ENCODE measurements at regions of chr15 and their contacts with region 1.

Region 1: GRCh38 chr15:84929744-84930371 is 45.4 kb downstream of the SLC28A1 start:
- DNase-seq: peak; percentile 53
- H3K4me3 ChIP-seq: no peak overlapping the region
- H3K27ac ChIP-seq: no peak overlapping the region
- H3K4me1 ChIP-seq: peaks cover 8 to 13% of the 10 kb centered on the region in 2 experiments; a peak in 2 of 4 replicates
- H3K27me3 ChIP-seq: no peaks in the 10 kb centered on the region
- CTCF ChIP-seq: no peak
- EP300 ChIP-seq: no peak
- RAD21 ChIP-seq: no peak

Region 2: DNA sequence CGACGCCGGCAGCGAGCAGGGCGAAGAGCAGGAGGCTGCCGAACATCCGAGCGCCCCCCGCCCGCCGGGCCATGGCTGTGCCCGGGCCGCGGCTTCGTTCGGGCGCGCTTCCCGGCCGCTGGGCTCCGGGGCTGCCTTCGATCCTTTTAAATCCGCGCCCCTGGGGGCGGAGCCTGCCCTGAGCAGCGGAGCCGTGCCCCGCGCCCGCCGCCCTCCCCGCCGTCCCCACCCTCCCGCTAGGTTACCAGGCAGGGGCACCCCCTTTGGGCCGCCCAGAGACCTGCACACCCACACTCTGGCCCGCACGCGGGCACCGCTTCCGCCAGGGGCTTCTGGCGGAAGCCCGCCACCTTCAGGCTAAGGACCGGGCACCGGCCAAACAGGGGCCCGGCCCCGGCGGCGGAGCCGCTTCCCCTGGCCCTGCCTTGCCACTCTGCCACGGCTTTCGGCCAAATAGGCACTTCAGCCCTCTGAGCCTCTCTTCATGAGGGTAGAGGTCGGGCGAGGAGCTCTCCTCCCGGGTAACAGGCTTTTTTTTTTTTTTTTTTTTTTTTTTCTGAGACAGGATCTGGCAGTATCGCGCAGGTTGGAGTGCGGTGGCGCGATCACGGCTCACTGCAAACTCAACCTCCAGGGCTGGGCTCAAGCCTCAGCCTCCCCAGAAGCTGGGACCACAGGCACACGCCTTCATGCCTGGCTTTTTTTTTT is 271.6 kb before region 1 on chr15 and contains the start of gene NMB:
- CTCF ChIA-PET with region 1: interaction called, 38 read pairs
- POLR2A ChIA-PET with region 1: interaction called, 4 read pairs
- DNase-seq: peak; percentile 98
- H3K4me3 ChIP-seq: peak within 1 kb of the TSS; percentile 52 to 54; a peak in 3 of 4 replicates
- H3K27ac ChIP-seq: peak within 1 kb of the TSS; percentile 53 to 83
- H3K4me1 ChIP-seq: peaks cover 4 to 23% of the 10 kb centered on the region in 2 experiments; a peak in 2 of 4 replicates
- H3K27me3 ChIP-seq: no peaks in the 10 kb centered on the region
- CTCF ChIP-seq: peak; percentile 70
- EP300 ChIP-seq: no peak
- RAD21 ChIP-seq: peak; percentile 36
- polyA plus RNA-seq, gene NMB: 5.3 and 6.5 TPM in 2 replicates

Region 3: DNA sequence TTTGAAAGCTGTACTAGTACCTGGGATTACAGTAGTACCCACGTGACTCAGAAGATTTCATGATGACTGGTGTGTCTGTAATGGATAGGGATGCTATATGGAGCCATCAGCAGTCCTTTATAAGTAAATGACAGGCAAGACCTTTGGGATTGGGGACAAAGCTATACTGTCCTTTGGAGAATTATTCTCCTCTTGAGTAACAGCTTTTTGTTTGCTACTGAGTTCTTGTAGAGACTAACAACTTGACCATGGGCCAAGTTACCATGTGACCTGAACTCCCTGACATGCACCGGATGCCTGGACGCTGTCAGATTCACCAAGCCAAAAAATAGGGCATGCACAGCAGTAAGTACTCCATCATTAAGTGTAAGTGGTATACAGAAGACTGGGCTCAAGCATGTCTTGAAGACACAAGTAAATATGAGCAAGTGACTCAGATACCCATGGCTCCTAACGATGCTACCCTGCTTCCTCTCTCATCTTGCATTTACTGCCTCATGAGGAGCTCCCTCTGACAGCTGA is 226.8 kb before region 1 on chr15:
- CTCF ChIA-PET with region 1: no interaction called
- POLR2A ChIA-PET with region 1: no interaction called
- DNase-seq: no peak
- H3K4me3 ChIP-seq: no peak overlapping the region
- H3K27ac ChIP-seq: no peak overlapping the region
- H3K4me1 ChIP-seq: no peaks in the 10 kb centered on the region; a peak in 1 of 4 replicates
- H3K27me3 ChIP-seq: no peaks in the 10 kb centered on the region
- CTCF ChIP-seq: no peak
- EP300 ChIP-seq: no peak
- RAD21 ChIP-seq: no peak

Region 4: GRCh38 chr15:84716036-84716799 is 213.6 kb before region 1 on chr15 and contains the start of gene SEC11A:
- CTCF ChIA-PET with region 1: interaction called, 13 read pairs
- POLR2A ChIA-PET with region 1: interaction called, 8 read pairs
- DNase-seq: peak; percentile 97
- H3K4me3 ChIP-seq: peak within 1 kb of the TSS; percentile 68 to 90
- H3K27ac ChIP-seq: peak within 1 kb of the TSS; percentile 92 to 93
- H3K4me1 ChIP-seq: peaks cover 5 to 7% of the 10 kb centered on the region in 2 experiments; a peak in 3 of 4 replicates
- H3K27me3 ChIP-seq: no peaks in the 10 kb centered on the region
- CTCF ChIP-seq: no peak
- EP300 ChIP-seq: peak in 1 of 2 experiments; percentile 18; a peak in 1 of 4 replicates
- RAD21 ChIP-seq: no peak
- polyA plus RNA-seq, gene SEC11A: 107 and 134 TPM in 2 replicates

Region 5: GRCh38 chr15:84863565-84864443 is 66.1 kb before region 1 on chr15:
- CTCF ChIA-PET with region 1: interaction called, 13 read pairs
- POLR2A ChIA-PET with region 1: no interaction called
- DNase-seq: no peak
- H3K4me3 ChIP-seq: no peak overlapping the region
- H3K27ac ChIP-seq: no peak overlapping the region; a peak in 1 of 4 replicates
- H3K4me1 ChIP-seq: peaks cover 0 to 6% of the 10 kb centered on the region in 2 experiments; a peak in 1 of 4 replicates
- H3K27me3 ChIP-seq: no peaks in the 10 kb centered on the region
- CTCF ChIP-seq: peak; percentile 8; the same call in 1 of the 2 replicates
- EP300 ChIP-seq: no peak
- RAD21 ChIP-seq: peak; percentile 37

Region 6: GRCh38 chr15:84908564-84908963 is 21.3 kb before region 1 on chr15:
- CTCF ChIA-PET with region 1: interaction called, 17 read pairs
- POLR2A ChIA-PET with region 1: no interaction called
- DNase-seq: no peak
- H3K4me3 ChIP-seq: no peak overlapping the region
- H3K27ac ChIP-seq: no peak overlapping the region
- H3K4me1 ChIP-seq: peaks cover 24 to 39% of the 10 kb centered on the region in 2 experiments; a peak in 3 of 4 replicates
- H3K27me3 ChIP-seq: no peaks in the 10 kb centered on the region
- CTCF ChIP-seq: no peak
- EP300 ChIP-seq: no peak
- RAD21 ChIP-seq: no peak

Region 7: DNA sequence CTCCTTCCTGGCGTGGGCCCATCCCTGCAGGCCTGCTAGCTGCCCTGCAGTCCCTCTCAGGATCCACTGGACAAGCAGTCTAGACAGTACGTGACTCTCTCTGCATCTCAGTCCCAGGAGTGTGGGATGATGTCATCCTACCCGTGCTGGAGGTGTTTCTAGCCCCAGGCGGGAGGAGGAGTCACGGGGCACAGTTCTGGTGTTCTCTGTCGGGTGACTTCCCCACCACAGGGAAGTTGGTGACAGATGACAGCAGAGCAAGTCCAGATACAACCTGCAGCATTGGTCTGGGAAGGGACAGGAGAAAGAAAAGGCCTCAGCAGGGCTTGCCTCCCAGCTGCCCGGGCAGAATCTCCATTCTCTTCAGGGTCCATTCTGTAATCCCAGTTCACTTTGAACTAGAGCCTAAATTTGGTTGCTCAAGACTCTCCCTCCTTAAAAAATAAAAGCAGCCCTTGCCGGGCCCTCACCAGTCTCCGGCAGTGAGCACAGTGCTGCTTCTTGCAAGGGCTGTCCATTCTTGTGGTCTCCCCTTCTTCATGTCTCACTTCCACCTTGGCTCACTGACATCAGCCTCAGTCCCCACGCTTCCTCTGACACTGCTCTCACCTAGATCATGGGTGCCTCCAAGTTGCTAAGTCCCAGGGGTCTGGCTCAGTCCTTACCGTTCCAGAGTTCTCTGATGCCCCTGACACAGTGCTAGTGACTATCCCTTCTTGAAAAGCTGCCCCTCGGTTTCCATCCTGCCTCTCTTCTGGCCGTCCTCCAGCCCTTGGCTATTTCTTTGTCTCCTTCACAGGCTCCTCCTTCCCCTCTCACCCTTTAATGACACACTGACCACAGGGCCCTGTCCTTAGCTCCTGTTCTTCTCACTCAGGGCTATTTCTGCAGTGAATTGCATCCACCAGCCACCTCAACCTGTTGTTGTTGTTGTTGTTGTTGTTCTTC is 14.6 kb before region 1 on chr15:
- CTCF ChIA-PET with region 1: interaction called, 17 read pairs
- POLR2A ChIA-PET with region 1: interaction called, 3 read pairs
- DNase-seq: peak; percentile 90
- H3K4me3 ChIP-seq: no peak overlapping the region
- H3K27ac ChIP-seq: peak overlapping the region; percentile 71 to 89
- H3K4me1 ChIP-seq: peaks cover 38 to 42% of the 10 kb centered on the region in 2 experiments; a peak in 3 of 4 replicates
- H3K27me3 ChIP-seq: no peaks in the 10 kb centered on the region
- CTCF ChIP-seq: no peak
- EP300 ChIP-seq: peak in 1 of 2 experiments; percentile 76; a peak in 2 of 4 replicates
- RAD21 ChIP-seq: no peak; the same call in 1 of the 2 replicates

Region 8: GRCh38 chr15:85100186-85100937 is 170.5 kb after region 1 on chr15:
- CTCF ChIA-PET with region 1: no interaction called
- POLR2A ChIA-PET with region 1: no interaction called
- DNase-seq: no peak
- H3K4me3 ChIP-seq: no peak overlapping the region
- H3K27ac ChIP-seq: no peak overlapping the region
- H3K4me1 ChIP-seq: no peaks in the 10 kb centered on the region
- H3K27me3 ChIP-seq: no peaks in the 10 kb centered on the region
- CTCF ChIP-seq: no peak
- EP300 ChIP-seq: no peak
- RAD21 ChIP-seq: no peak